ENCODE measurements at regions of chr16 and their contacts with region 1.

Region 1: DNA sequence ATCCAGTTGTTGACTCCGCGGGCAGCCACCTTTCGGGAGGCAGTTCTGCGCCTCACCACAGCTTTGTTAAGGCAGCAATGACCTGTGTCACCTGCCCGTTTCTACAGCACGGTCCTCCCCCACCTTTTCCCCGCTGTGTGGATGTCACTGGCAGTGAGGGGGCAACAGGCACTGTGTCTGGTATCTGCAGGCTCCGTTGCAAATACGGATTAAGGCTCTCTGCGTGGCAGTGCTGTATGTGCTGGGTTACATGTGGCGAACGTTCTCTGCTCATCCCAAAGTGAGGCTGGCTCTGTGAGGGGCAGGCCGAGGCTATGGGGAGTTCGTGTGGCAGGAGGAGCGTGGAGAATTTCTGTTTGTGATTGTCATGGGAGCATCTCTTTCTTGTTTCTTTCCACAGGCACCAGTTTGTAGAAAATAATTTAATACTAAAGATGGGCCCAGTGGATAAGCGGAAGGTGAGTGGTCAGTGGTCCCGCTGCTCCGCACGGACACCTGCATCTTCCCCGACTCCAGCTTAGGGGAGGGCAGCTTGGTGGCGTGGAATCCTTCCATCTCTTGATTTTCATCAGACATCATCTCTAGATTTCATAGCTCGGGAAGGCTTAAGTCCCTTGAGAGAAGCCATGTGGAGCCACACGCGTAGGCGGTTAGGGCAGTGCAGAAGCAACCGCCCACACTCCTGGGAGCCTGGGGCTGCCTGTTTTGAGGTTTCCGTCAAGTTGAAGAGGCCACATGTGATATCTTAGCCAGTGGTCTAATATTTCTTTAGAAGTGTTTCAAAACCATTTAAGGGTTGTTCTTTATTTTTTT is 57.8 kb downstream of the PDPK1 start:
- DNase-seq: no peak

Region 2: GRCh38 chr16:2531767-2532493 is 63.7 kb before region 1 on chr16:
- intact Hi-C with region 1: loop called (anchors 10 kb)
- DNase-seq: peak; percentile 100

Region 3: DNA sequence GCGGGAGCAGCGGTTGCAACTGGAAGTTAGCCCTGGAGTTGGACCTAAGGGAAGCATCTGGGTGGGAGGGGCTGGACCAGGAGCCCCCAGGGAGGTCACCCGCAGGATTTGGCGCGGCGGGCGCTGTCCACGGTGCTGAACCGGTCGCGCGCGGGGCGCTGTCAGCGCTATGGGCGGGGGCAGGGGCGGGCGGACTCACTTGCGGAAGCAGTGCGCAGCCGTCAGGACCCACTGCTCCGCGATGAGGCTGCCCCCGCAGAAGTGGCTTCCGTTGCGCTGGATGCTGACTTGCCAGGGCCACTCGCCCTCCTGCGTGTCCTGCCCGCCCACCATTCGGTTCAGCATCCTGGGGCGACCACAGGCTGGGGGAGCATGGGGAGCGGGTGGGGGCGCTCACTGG is 119.9 kb after region 1 on chr16:
- intact Hi-C with region 1: no loop called
- DNase-seq: peak; percentile 84